Activated naive CD8-positive, alpha-beta T cell treated with anti-CD3 and anti-CD28 coated beads, Interleukin-2, amount 10 ng/mL, durations not matched to agents 7 days and 5 days (primary cell): ENCODE measurements at regions of chr3 and their contacts with region 1.

Region 1: GRCh38 chr3:57692259-57693147 is at the start of gene DENND6A:
- DNase-seq: peak; percentile 98
- ATAC-seq: peak; percentile 84
- H3K4me3 Mint-ChIP-seq: peak within 1 kb of the TSS; percentile 92
- H3K27ac Mint-ChIP-seq: peak within 1 kb of the TSS; percentile 85
- H3K4me1 Mint-ChIP-seq: peaks cover 30% of the 10 kb centered on the region
- H3K27me3 Mint-ChIP-seq: no peaks in the 10 kb centered on the region
- total RNA-seq, gene DENND6A: 30.6 to 31.9 TPM

Region 2: GRCh38 chr3:57670543-57670942 is 22.0 kb before region 1 on chr3:
- POLR2A ChIA-PET with region 1: interaction called, 15 read pairs
- DNase-seq: no peak
- ATAC-seq: no peak
- H3K4me3 Mint-ChIP-seq: no peak overlapping the region
- H3K27ac Mint-ChIP-seq: no peak overlapping the region
- H3K4me1 Mint-ChIP-seq: peaks cover 20% of the 10 kb centered on the region
- H3K27me3 Mint-ChIP-seq: no peaks in the 10 kb centered on the region

Region 3: GRCh38 chr3:57755668-57756527 is 63.4 kb after region 1 on chr3 and contains the start of gene SLMAP:
- POLR2A ChIA-PET with region 1: interaction called, 11 read pairs
- DNase-seq: peak; percentile 90
- ATAC-seq: peak; percentile 97
- H3K4me3 Mint-ChIP-seq: peak within 1 kb of the TSS; percentile 93
- H3K27ac Mint-ChIP-seq: peak within 1 kb of the TSS; percentile 98
- H3K4me1 Mint-ChIP-seq: peaks cover 27% of the 10 kb centered on the region
- H3K27me3 Mint-ChIP-seq: peaks cover 16% of the 10 kb centered on the region
- total RNA-seq, gene SLMAP: 58.0 to 69.7 TPM